ENCODE measurements at regions of chr3 and their contacts with region 1.

Region 1: DNA sequence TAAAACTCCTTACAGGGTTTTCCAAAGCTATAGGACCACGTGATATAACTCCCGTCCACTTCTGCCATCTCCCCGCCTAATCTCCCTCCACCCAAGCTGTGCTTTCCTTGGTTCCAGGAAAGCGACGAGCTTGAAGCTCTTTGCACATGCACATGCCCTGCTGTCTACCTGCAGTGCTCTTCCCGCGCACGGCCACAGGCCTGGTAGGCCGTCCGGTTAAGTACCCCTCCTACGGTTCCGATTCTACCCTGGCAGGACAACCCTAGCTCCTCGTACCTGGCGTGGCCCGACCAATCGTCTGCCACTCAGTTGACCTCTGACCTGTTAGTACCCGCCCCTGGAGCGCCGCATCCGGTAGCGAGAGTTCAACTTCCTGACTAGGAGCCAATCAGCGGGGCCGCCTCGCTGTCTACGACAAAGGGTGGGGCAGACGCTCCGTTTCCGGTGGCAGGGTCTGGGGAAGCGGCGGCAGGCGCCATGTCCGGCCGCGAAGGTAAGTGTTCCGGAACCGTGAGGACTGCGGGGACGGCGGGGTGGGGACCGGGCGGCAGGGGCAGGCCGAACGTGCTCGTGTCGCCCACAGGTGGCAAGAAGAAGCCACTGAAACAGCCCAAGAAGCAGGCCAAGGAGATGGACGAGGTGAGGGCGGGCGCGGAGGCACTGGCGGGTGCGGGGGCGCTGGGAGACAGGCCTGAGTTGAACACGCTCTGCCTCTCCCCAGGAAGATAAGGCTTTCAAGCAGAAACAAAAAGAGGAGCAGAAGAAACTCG is at the starts of genes CCDC51 and TMA7:
- DNase-seq: peak; percentile 90 to 98 (median 96)
- ATAC-seq: peak; percentile 97
- H3K4me3 ChIP-seq: peak within 1 kb of the TSS; percentile 78
- H3K4me3 Mint-ChIP-seq: peak within 1 kb of the TSS; percentile 86 to 100 (median 94)
- H3K27ac ChIP-seq: peak within 1 kb of the TSS; percentile 93
- H3K27ac Mint-ChIP-seq: peak within 1 kb of the TSS; percentile 92 to 100 (median 98)
- H3K4me1 ChIP-seq: peaks cover 18 to 19% of the 10 kb centered on the region in 2 donors
- H3K4me1 Mint-ChIP-seq: peaks cover 16 to 50% (median 34%) of the 10 kb centered on the region in 7 donors
- H3K27me3 ChIP-seq: no peaks in the 10 kb centered on the region
- H3K27me3 Mint-ChIP-seq: no peaks in the 10 kb centered on the region
- total RNA-seq, gene CCDC51: 3.6 to 16.5 (median 5.0) TPM
- total RNA-seq, gene TMA7: 193 to 278 (median 236) TPM

Region 2: GRCh38 chr3:48088749-48089466 is 351.1 kb before region 1 on chr3:
- CTCF ChIA-PET with region 1: no interaction called
- POLR2A ChIA-PET with region 1: no interaction called
- intact Hi-C with region 1: loop called in 1 of 2 experiments (anchors 1 kb)
- DNase-seq: peak; percentile 89 to 96 (median 94)
- ATAC-seq: peak; percentile 97
- H3K4me3 ChIP-seq: peak overlapping the region; percentile 85
- H3K4me3 Mint-ChIP-seq: peak overlapping the region; percentile 90 to 99 (median 96)
- H3K27ac ChIP-seq: peak overlapping the region; percentile 95
- H3K27ac Mint-ChIP-seq: peak overlapping the region; percentile 71 to 99 (median 98)
- H3K4me1 ChIP-seq: peaks cover 7 to 11% of the 10 kb centered on the region in 2 donors
- H3K4me1 Mint-ChIP-seq: peaks cover 14 to 33% (median 29%) of the 10 kb centered on the region in 7 donors
- H3K27me3 ChIP-seq: no peaks in the 10 kb centered on the region
- H3K27me3 Mint-ChIP-seq: peaks cover 0 to 18% (median 0%) of the 10 kb centered on the region in 5 donors

Region 3: DNA sequence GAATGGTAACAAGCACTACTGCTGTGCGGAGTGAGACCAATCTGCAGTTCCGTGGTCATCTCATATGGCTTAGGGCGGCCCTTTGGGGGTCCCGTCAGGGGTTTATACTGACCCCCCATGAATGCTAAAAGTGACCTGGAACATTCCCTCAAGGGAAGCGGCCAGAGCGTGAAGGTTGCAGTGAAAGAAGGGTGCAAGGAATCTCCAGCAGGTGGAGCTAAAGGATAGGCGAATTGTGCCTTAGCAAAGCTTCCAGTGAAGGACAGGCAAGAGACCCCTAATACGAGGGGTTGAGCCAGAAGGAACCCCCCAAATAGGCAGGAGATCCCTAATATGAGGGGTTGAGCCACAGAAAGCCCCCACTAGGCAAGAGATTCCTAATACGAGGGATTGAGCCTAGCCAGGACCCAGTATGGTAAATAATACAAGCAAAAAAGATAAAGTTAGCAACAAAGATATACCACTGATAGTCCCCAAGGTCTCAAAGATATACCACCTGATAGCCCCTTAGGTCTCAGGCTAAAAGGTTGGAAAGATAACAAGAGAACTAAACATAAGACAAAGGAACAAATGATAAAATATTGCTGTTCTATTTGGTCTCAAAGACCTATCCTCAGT is 166.3 kb before region 1 on chr3:
- CTCF ChIA-PET with region 1: interaction called, 22 read pairs
- POLR2A ChIA-PET with region 1: interaction called, 4 read pairs
- intact Hi-C with region 1: loop called (anchors 1 kb)
- DNase-seq: peak in 8 of 9 donors; percentile 37 to 66 (median 55)
- ATAC-seq: peak; percentile 60
- H3K4me3 ChIP-seq: no peak overlapping the region
- H3K4me3 Mint-ChIP-seq: no peak overlapping the region
- H3K27ac ChIP-seq: no peak overlapping the region
- H3K27ac Mint-ChIP-seq: peak overlapping the region in 4 of 9 donors; percentile 8 to 74 (median 51)
- H3K4me1 ChIP-seq: peaks cover 4 to 14% of the 10 kb centered on the region in 2 donors
- H3K4me1 Mint-ChIP-seq: peaks cover 6 to 29% (median 21%) of the 10 kb centered on the region in 7 donors
- H3K27me3 ChIP-seq: no peaks in the 10 kb centered on the region
- H3K27me3 Mint-ChIP-seq: no peaks in the 10 kb centered on the region

Region 4: GRCh38 chr3:48415554-48415953 is 24.5 kb before region 1 on chr3:
- CTCF ChIA-PET with region 1: interaction called, 3 read pairs
- POLR2A ChIA-PET with region 1: no interaction called
- intact Hi-C with region 1: loop called in 1 of 2 experiments (anchors 2 kb)
- DNase-seq: peak in 1 of 9 donors; percentile 6
- ATAC-seq: no peak
- H3K4me3 ChIP-seq: no peak overlapping the region
- H3K4me3 Mint-ChIP-seq: no peak overlapping the region
- H3K27ac ChIP-seq: no peak overlapping the region
- H3K27ac Mint-ChIP-seq: no peak overlapping the region
- H3K4me1 ChIP-seq: no peaks in the 10 kb centered on the region
- H3K4me1 Mint-ChIP-seq: no peaks in the 10 kb centered on the region
- H3K27me3 ChIP-seq: no peaks in the 10 kb centered on the region
- H3K27me3 Mint-ChIP-seq: no peaks in the 10 kb centered on the region

Region 5: GRCh38 chr3:48507351-48508061 is 67.5 kb after region 1 on chr3:
- CTCF ChIA-PET with region 1: interaction called, 63 read pairs
- POLR2A ChIA-PET with region 1: interaction called, 19 read pairs
- intact Hi-C with region 1: loop called (anchors 1 kb)
- DNase-seq: peak; percentile 46 to 78 (median 69)
- ATAC-seq: peak; percentile 89
- H3K4me3 ChIP-seq: no peak overlapping the region
- H3K4me3 Mint-ChIP-seq: peak overlapping the region in 9 of 10 donors; percentile 30 to 78 (median 47)
- H3K27ac ChIP-seq: no peak overlapping the region
- H3K27ac Mint-ChIP-seq: peak overlapping the region; percentile 6 to 86 (median 76)
- H3K4me1 ChIP-seq: peaks cover 27 to 41% of the 10 kb centered on the region in 2 donors
- H3K4me1 Mint-ChIP-seq: peaks cover 40 to 61% (median 57%) of the 10 kb centered on the region in 7 donors
- H3K27me3 ChIP-seq: no peaks in the 10 kb centered on the region
- H3K27me3 Mint-ChIP-seq: no peaks in the 10 kb centered on the region

Region 6: DNA sequence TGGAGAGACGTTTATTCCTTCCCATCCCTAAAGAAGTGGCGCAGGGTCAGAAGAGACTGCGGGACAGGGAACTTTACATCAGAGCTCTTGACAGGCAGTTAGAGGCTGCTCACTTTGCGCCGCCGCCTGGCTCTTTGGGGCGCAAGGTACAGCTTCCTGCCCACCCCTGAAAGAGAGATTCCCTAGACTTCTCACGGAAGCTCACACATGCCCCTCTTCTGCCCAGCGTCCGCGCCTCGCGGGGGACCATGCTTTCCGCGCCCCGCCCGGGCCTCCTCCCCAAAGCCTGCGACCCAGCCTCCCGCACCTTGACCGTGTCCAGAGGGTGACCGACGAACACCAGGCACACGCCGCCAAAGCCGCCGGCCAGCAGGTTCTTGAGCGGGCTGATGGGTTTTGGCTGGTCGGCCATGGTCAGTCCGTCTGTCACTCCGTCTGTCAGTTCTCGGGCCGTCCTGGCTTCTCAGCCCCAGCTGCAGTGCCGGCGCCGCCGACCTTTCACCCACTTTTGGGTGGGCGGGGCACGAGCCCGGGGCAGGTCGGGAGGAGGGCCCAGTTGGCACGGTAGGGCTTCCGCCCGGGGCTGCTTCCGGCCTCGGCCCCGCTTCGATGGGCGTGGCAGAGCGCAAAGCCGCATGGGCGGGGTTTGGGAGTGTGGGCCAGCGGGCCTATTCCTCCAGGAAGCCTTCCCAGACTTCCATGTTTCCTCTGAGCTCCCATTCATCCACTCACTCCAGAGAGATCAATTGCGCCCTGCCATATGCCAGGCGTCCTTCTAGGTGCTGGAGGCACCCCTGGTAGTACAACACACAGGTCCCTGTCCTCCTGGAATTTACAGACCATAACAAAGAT is 458.6 kb after region 1 on chr3 and contains the start of gene SLC25A20:
- CTCF ChIA-PET with region 1: no interaction called
- POLR2A ChIA-PET with region 1: no interaction called
- intact Hi-C with region 1: loop called in 1 of 2 experiments (anchors 10 kb)
- DNase-seq: peak; percentile 78 to 95 (median 85)
- ATAC-seq: peak; percentile 98
- H3K4me3 ChIP-seq: peak within 1 kb of the TSS; percentile 91
- H3K4me3 Mint-ChIP-seq: peak within 1 kb of the TSS; percentile 89 to 99 (median 94)
- H3K27ac ChIP-seq: peak within 1 kb of the TSS; percentile 76
- H3K27ac Mint-ChIP-seq: peak within 1 kb of the TSS; percentile 83 to 99 (median 93)
- H3K4me1 ChIP-seq: peaks cover 21 to 23% of the 10 kb centered on the region in 2 donors
- H3K4me1 Mint-ChIP-seq: peaks cover 27 to 51% (median 41%) of the 10 kb centered on the region in 7 donors
- H3K27me3 ChIP-seq: no peaks in the 10 kb centered on the region
- H3K27me3 Mint-ChIP-seq: no peaks in the 10 kb centered on the region
- total RNA-seq, gene SLC25A20: 6.6 to 27.3 (median 12.8) TPM

Region 7: GRCh38 chr3:49912881-49913281 is 1472.9 kb after region 1 on chr3:
- CTCF ChIA-PET with region 1: no interaction called
- POLR2A ChIA-PET with region 1: no interaction called
- intact Hi-C with region 1: no loop called
- DNase-seq: no peak
- ATAC-seq: no peak
- H3K4me3 ChIP-seq: no peak overlapping the region
- H3K4me3 Mint-ChIP-seq: no peak overlapping the region
- H3K27ac ChIP-seq: no peak overlapping the region
- H3K27ac Mint-ChIP-seq: peak overlapping the region in 1 of 9 donors; percentile 32
- H3K4me1 ChIP-seq: no peaks in the 10 kb centered on the region
- H3K4me1 Mint-ChIP-seq: peaks cover 0 to 10% (median 3%) of the 10 kb centered on the region in 7 donors
- H3K27me3 ChIP-seq: no peaks in the 10 kb centered on the region
- H3K27me3 Mint-ChIP-seq: no peaks in the 10 kb centered on the region